ENCODE measurements at regions of chr17 and their contacts with region 1.

Region 1: GRCh38 chr17:76296186-76296585 is 11.9 kb downstream of the QRICH2 start:
- DNase-seq: no peak
- H3K4me3 ChIP-seq: no peak overlapping the region
- H3K27ac ChIP-seq: peak overlapping the region; percentile 8 to 67 (median 52)
- H3K4me1 ChIP-seq: peaks cover 0 to 16% (median 11%) of the 10 kb centered on the region in 4 donors
- H3K27me3 ChIP-seq: no peaks in the 10 kb centered on the region
- CTCF ChIP-seq: peak in 1 of 5 experiments; percentile 5
- EP300 ChIP-seq: no peak
- POLR2A ChIP-seq: no peak

Region 2: DNA sequence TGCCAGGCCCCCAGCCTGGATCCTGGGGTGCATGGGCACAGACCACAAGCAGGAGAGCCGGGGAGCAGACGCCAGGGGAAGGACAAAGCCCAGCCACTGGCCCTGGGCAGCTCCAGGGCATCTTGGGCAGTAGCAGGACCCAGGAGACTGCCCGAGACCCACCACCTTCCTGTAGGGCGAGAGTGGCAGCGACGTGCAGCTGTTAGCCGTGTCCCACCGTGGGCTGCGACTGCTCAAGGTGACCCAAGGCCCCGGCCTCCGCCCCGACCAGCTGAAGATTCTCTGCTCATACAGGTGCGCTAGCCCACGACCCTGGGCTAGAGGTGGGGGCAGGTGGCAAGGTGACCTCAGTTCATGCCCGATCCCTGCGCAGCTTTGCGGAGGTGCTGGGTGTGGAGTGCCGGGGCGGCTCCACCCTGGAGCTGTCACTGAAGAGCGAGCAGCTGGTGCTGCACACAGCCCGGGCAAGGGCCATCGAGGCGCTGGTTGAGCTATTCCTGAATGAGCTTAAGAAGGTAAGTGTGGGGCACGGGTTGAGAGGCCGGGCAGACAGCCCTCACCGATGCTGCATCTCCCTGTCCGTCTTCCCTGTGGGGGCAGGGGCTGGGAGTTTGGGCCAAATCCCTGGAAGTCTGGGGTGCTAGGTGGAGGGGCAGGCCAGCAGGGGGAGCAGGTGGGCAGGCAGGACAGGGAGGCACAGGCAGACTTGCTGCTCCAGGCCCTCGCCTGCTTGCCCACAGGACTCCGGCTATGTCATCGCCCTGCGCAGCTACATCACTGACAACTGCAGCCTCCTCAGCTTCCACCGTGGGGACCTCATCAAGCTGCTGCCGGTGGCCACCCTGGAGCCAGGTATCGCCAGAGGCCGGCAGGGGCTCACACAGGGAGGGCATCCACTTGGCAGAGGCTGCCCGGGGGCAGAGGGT is 676.4 kb before region 1 on chr17:
- in situ Hi-C with region 1: no loop called
- intact Hi-C with region 1: loop called (anchors 10 kb)
- DNase-seq: no peak
- H3K4me3 ChIP-seq: no peak overlapping the region
- H3K27ac ChIP-seq: no peak overlapping the region
- H3K4me1 ChIP-seq: peaks cover 6 to 19% (median 10%) of the 10 kb centered on the region in 4 donors
- H3K27me3 ChIP-seq: no peaks in the 10 kb centered on the region
- CTCF ChIP-seq: peak in 4 of 5 experiments; percentile 22 to 40 (median 26)
- EP300 ChIP-seq: no peak
- POLR2A ChIP-seq: no peak

Region 3: DNA sequence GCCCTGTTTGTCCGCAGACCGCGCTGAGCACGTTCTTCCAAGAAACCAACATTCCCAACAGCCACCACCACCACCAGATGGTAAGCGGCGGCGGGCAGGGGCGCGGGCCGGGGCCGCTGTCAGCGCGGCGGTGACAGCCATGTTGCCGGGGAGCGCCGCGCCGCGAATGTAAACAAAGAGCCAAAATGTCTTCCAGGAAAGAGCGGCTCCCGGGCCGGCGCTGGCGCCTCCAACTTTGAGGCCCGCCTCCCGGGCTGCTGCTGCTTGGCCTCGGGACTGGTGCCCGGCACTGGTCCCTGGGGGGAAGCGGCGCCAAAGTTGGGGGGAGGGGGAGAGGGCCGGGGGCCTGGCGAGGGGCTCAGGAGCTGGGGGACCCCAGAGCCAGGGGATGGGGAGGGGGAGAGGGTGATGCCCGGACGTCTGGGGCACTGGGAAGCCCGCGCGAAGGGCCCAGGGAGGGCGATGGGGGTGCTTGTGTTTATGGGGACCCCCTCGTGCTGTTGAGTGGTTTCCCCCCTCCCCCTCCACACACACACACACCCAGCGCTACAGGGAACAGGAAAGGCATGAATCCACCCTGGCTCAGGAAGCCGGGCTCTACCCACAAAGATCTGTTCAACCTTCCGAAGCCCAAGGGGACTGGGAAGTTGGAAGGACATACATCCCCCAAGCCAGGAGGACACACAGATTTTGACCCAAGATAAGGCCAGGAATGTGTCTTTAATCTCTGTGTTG is 30.1 kb before region 1 on chr17:
- in situ Hi-C with region 1: no loop called
- intact Hi-C with region 1: no loop called
- DNase-seq: peak; percentile 62
- H3K4me3 ChIP-seq: peak overlapping the region; percentile 90 to 100 (median 98)
- H3K27ac ChIP-seq: peak overlapping the region; percentile 94 to 98 (median 96)
- H3K4me1 ChIP-seq: peaks cover 41 to 83% (median 74%) of the 10 kb centered on the region in 4 donors
- H3K27me3 ChIP-seq: no peaks in the 10 kb centered on the region
- CTCF ChIP-seq: no peak
- EP300 ChIP-seq: no peak
- POLR2A ChIP-seq: no peak

Region 4: GRCh38 chr17:76432712-76433336 is 136.6 kb after region 1 on chr17:
- in situ Hi-C with region 1: no loop called
- intact Hi-C with region 1: no loop called
- DNase-seq: no peak
- H3K4me3 ChIP-seq: no peak overlapping the region
- H3K27ac ChIP-seq: no peak overlapping the region
- H3K4me1 ChIP-seq: peaks cover 4 to 7% (median 6%) of the 10 kb centered on the region in 4 donors
- H3K27me3 ChIP-seq: no peaks in the 10 kb centered on the region
- CTCF ChIP-seq: peak in 3 of 5 experiments; percentile 19 to 41 (median 24)
- EP300 ChIP-seq: no peak
- POLR2A ChIP-seq: no peak